Transverse colon (tissue), 4 donors: ENCODE measurements at regions of chr21 and their contacts with region 1.

Region 1: DNA sequence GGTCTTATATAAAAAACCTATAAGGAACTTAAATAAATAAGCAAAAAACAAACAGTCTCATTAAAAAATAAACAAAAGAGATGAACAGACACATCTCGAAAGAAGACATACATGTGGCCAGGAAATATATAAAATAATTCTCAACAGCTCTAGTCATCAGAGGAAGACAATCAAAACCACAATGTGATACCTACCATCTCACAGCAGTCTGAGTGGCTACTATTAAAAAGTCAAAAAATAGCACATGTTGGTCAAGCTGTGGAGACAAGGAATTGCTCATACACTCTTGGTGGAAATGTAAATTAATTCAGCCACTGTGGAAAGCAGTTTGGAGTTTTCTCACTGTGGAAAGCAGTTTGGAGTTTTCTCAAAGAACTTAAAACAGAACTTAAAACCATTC is 100.3 kb upstream of the ADAMTS5 start:
- DNase-seq: no peak
- H3K4me3 ChIP-seq: no peak overlapping the region
- H3K27ac ChIP-seq: no peak overlapping the region
- H3K4me1 ChIP-seq: no peaks in the 10 kb centered on the region
- H3K27me3 ChIP-seq: no peaks in the 10 kb centered on the region
- CTCF ChIP-seq: no peak
- EP300 ChIP-seq: no peak
- POLR2A ChIP-seq: no peak

Region 2: DNA sequence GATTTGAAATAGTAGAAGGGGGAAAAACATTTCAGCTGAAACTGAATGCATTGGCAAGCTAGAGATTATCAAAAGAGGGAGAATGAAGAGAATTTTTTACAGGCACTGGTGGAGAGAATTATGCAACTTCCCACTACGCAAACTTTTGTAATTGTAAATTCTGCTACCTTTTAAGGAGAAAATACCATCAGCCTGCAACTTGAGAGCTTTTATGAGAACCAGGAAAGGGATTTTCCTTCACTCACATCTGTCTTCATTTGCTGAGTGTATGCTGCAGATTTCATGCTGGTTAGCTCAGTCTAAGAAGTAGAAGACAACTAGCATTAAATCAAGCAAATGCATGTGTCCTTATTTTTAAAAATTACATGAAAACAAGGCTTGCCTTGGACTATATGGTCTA is 265.7 kb before region 1 on chr21:
- in situ Hi-C with region 1: no loop called
- intact Hi-C with region 1: loop called (anchors 5 kb)
- DNase-seq: no peak
- H3K4me3 ChIP-seq: no peak overlapping the region
- H3K27ac ChIP-seq: peak overlapping the region; percentile 64 to 74 (median 66)
- H3K4me1 ChIP-seq: peaks cover 0 to 4% (median 1%) of the 10 kb centered on the region in 4 donors
- H3K27me3 ChIP-seq: no peaks in the 10 kb centered on the region
- CTCF ChIP-seq: no peak
- EP300 ChIP-seq: no peak
- POLR2A ChIP-seq: no peak